ENCODE measurements at regions of chr1 and their contacts with region 1.

Region 1: DNA sequence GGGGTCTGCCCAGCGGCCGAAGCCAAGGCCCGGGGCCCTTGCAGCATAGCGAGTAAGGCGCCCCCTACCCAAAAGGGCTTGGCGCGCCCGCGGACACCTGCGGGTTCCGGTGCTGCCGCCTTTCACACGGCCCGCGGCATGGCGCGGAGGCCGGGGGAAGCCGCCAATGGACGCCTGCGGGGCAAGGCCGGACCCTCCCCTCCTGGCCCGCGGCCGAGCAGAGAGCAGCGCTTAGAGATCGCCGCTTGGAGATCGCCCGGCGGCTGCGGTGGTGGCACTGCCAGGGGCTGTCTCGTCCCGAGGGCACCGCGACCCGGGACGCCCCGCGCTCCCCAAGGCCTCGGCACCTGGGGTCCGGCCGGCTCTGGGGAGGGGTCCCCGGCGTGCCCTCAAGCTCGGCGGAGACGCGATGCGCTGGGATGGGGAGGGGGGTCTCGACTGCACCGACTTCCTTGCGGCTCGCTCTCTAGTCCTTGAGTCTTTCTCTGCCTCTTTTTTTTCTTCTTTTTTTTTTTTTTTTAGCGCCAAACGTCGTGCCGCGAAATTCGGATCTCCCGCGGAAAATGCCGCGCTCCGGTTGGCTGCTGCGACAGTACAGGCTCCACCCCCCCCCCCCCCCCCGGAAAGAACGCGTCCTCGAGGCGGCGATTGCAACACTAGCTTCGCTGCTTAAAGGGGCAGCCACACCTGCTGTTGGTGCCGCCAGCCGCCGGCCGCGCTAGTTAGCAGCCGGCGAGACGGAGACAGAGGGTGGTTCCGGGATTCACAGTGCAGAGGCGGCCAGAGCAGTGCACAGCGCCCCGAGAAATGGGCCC is at the start of gene E2F2:
- DNase-seq: peak; percentile 92

Region 2: DNA sequence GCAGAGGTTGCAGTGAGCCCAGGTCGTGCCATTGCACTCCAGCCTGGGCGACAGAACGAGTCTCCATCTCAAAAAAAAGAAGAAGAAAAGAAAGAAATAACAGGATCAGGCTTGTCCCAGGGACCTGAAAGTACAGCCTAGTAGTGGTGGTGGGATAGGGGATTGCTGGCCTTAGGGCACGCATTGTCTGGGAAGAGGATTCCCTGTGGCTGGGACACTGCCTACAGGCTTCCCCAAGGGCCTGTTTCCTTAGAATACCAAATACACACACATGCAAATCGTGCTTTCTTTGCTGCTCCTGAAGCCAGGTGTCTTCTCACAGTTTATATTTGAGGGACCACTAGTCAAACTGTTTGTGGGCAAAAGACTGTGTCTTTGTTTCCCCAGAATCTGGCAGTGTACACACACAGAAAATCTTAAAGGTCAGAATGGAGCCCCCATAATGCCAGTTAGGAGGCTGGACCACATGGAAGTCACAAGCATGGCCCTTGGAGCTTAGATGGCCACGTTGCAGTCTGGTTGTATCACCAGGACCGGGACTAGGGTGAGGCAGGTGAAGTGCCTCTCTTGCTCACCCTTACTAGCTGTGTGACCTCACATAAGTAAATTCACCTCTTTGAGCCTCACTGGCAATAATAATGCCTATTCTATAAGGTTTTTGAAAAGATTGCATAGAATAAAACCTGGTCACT is 34.3 kb before region 1 on chr1:
- CTCF ChIA-PET with region 1: interaction called, 12 read pairs
- POLR2A ChIA-PET with region 1: interaction called, 21 read pairs
- DNase-seq: no peak

Region 3: DNA sequence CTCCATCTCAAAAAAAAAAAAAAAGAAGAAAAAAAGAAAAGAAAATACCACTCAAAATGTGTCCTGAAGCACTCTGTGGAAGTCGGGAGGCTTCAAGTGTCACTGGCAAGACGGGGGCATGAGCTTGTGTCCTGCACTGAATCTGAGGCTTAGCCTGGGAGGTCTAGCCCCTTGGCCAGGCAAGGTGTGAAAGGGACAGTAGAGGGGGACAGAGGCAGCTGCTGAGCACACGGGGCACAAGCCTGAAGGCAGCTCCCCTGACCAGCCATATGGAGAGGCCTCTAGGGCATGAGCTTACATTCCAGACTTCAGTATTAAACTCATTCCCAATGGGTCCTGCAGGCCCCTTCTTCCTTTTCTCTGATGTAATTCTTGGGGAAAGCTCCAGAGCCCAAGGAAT is 23.4 kb before region 1 on chr1:
- CTCF ChIA-PET with region 1: interaction called, 3 read pairs
- POLR2A ChIA-PET with region 1: interaction called, 10 read pairs
- DNase-seq: no peak

Region 4: DNA sequence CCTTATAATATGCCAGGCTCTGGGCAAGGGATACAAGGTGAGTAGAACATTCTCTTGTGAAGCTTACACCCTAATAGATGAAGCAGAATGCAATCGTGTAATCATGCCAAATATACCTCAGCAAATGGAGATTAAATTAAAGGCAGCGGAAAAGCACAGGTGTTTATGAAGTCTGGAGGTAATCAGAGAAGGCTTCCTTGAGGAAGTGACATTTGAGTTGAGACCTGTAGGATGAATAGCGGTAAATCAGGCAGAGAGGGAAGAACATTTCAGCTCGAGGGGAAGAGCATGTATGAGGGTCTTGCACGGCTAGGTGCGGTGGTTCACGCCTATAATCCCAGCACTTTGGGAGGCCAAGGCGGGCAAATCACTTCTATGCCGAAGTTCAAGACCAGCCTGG is 13.4 kb before region 1 on chr1:
- CTCF ChIA-PET with region 1: interaction called, 4 read pairs
- POLR2A ChIA-PET with region 1: interaction called, 14 read pairs
- DNase-seq: no peak

Region 5: GRCh38 chr1:23727362-23727827 is 196.4 kb after region 1 on chr1:
- CTCF ChIA-PET with region 1: no interaction called
- POLR2A ChIA-PET with region 1: no interaction called
- DNase-seq: no peak